ENCODE measurements at regions of chr3 and their contacts with region 1.

Region 1: GRCh38 chr3:127455541-127456450 is 134.7 kb downstream of the TPRA1 start:
- DNase-seq: no peak
- H3K4me3 ChIP-seq: peak overlapping the region; percentile 27
- H3K27me3 ChIP-seq: peaks cover 11% of the 10 kb centered on the region
- CTCF ChIP-seq: peak; percentile 51

Region 2: GRCh38 chr3:127442506-127442905 is 13.3 kb before region 1 on chr3:
- CTCF ChIA-PET with region 1: interaction called, 12 read pairs
- POLR2A ChIA-PET with region 1: no interaction called
- DNase-seq: no peak
- H3K4me3 ChIP-seq: no peak overlapping the region
- H3K27me3 ChIP-seq: 0 out of 2 replicates have a peak, but pooled peaks cover 1% of the 10 kb centered on the region
- CTCF ChIP-seq: no peak

Region 3: DNA sequence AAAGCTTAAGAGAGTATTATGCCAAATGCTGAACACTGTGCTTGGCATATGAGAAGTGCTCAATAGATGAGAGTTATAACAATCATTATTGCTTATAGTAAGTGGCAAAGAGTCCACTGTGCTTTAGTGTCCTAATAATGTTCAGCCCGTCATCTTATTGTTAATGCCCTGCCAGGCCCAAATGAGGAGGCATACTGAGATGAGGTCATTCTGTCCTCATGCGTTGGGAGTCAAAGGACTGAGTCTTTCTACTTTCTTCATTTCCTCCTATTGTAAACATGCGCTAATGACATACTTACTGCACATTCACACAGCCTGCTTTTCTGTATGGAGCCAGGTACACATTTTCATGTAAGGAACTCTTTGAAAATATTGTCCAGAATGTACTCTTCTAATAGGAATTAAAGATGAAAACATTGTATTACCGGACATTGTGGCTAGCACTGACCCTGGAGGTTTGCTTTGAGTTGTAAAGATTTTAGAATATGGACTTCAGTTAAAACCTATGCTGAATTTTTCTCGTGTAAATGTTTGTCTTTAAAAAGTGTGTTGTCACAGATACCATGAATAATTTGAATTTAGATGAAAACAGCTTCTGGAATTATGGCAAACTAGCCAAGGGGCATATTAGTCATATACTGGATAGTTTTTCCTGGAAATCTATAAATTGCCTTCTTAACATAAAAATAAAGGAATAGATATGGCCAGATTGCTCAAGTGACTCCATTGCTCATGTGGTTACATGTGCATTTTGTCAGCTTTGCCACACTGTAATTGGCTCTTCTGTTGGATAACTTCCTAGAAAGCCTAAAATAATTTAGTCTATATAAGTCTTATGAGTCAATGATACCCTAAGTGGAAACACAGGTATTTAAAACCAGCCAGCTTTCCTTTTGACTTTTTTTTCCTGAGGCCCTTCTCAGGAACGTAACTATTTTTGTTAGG is 497.6 kb after region 1 on chr3:
- CTCF ChIA-PET with region 1: no interaction called
- POLR2A ChIA-PET with region 1: no interaction called
- DNase-seq: no peak
- H3K4me3 ChIP-seq: no peak overlapping the region
- H3K27me3 ChIP-seq: no peaks in the 10 kb centered on the region
- CTCF ChIP-seq: no peak

Measured in BJ (cell line).